Activated CD4-positive, alpha-beta T cell treated with anti-CD3 and anti-CD28 coated beads for 36 hours (primary cell): ENCODE measurements at regions of chr5 and their contacts with region 1.

Region 1: DNA sequence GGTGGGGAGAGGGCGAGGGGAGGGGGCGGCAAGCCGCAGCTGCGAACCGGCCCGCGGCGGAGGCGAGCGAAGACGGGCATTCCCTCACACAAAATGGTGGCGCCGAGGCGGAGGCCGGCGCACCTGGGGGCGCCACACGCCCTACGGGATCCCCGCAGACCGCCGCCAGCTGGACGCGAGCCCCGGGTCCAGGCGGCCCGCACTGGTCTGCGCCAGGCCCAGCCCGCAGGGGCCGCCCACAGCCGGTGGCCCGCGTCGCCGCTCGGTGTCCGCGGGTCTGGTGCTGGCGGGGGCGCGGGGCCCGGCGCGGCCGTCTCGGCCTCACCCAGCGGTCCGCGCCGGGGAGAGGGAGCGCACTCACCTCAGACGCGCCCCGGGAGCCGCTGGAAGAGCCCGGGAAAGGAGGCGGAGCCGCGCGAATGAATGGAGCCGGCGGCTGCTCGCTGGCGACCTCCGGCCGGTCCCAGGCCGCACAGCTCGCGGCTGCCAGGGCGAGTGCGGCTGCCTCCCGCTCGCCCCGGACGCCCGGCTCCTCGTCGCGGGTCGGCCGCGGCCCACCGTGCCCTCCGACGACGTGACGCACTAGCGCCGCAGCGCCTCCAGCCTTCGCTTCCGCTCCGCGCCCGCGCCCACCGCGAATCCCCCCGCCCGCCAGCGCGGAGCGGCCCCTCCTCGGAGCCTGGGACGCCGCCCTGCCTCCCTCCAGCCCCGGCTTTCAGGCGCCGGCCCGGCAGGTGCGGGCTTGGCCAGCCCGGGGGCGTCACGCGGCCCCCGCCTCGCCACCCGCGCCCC is at the start of gene FAM169A:
- DNase-seq: peak; percentile 65
- ATAC-seq: peak; percentile 69
- H3K4me3 Mint-ChIP-seq: peak within 1 kb of the TSS; percentile 92
- H3K27ac Mint-ChIP-seq: peak within 1 kb of the TSS; percentile 95
- H3K4me1 Mint-ChIP-seq: peaks cover 29% of the 10 kb centered on the region
- H3K27me3 Mint-ChIP-seq: peaks cover 2% of the 10 kb centered on the region
- total RNA-seq, gene FAM169A: 6.1 to 9.1 TPM

Region 2: GRCh38 chr5:74684900-74685851 is 180.8 kb before region 1 on chr5 and contains the start of gene HEXB:
- CTCF ChIA-PET with region 1: no interaction called
- POLR2A ChIA-PET with region 1: no interaction called
- intact Hi-C with region 1: loop called in 1 of 2 experiments (anchors 1 kb)
- DNase-seq: peak; percentile 94
- ATAC-seq: peak; percentile 98
- H3K4me3 Mint-ChIP-seq: peak within 1 kb of the TSS; percentile 73
- H3K27ac Mint-ChIP-seq: peak within 1 kb of the TSS; percentile 87
- H3K4me1 Mint-ChIP-seq: peaks cover 21% of the 10 kb centered on the region
- H3K27me3 Mint-ChIP-seq: no peaks in the 10 kb centered on the region
- total RNA-seq, gene HEXB: 42.6 to 47.6 TPM